ENCODE measurements at regions of chr4 and their contacts with region 1.

Region 1: GRCh38 chr4:22500831-22501719 is 14.8 kb downstream of the ADGRA3 start:
- DNase-seq: no peak
- H3K4me3 ChIP-seq: no peak overlapping the region
- H3K27ac ChIP-seq: peak overlapping the region; percentile 24
- H3K4me1 ChIP-seq: peaks cover 19% of the 10 kb centered on the region
- H3K27me3 ChIP-seq: no peaks in the 10 kb centered on the region
- CTCF ChIP-seq: no peak
- POLR2A ChIP-seq: no peak

Region 2: GRCh38 chr4:21102667-21103066 is 1398.4 kb before region 1 on chr4:
- intact Hi-C with region 1: no loop called
- DNase-seq: no peak
- H3K4me3 ChIP-seq: no peak overlapping the region
- H3K27ac ChIP-seq: no peak overlapping the region
- H3K4me1 ChIP-seq: no peaks in the 10 kb centered on the region
- H3K27me3 ChIP-seq: no peaks in the 10 kb centered on the region
- CTCF ChIP-seq: no peak
- POLR2A ChIP-seq: no peak

Region 3: DNA sequence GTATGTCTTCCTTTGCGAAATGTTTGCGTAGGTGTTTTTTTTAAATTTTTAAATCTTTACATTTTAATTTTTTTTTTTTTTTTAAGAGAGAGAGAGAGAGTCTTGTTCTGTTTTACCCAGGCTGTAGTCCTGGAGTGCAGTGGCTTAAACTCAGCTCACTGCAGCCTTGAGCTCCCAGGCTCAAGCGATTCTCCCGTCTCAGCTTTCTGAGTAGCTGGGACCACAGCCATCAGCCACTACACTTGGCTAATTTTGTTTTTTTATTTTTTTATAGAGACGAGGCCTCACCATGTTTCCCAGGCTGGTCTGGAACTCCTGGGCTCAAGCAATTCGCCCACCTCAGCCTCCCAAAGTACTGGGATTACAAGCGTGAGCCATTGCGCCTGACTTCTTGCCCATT is 147.9 kb after region 1 on chr4:
- intact Hi-C with region 1: no loop called
- DNase-seq: no peak
- H3K4me3 ChIP-seq: no peak overlapping the region
- H3K27ac ChIP-seq: no peak overlapping the region
- H3K4me1 ChIP-seq: no peaks in the 10 kb centered on the region
- H3K27me3 ChIP-seq: no peaks in the 10 kb centered on the region
- CTCF ChIP-seq: no peak
- POLR2A ChIP-seq: no peak

Region 4: GRCh38 chr4:23789766-23790165 is 1288.7 kb after region 1 on chr4:
- intact Hi-C with region 1: loop called (anchors 5 kb)
- DNase-seq: no peak
- H3K4me3 ChIP-seq: no peak overlapping the region
- H3K27ac ChIP-seq: no peak overlapping the region
- H3K4me1 ChIP-seq: no peaks in the 10 kb centered on the region
- H3K27me3 ChIP-seq: no peaks in the 10 kb centered on the region
- CTCF ChIP-seq: no peak
- POLR2A ChIP-seq: no peak

Measured in vagina (tissue), 2 donors.